Right cardiac atrium (tissue), 5 donors: ENCODE measurements at regions of chr11 and their contacts with region 1.

Region 1: GRCh38 chr11:86802601-86803051 is 2.3 kb downstream of the PRSS23 start:
- DNase-seq: no peak
- ATAC-seq: peak in 1 of 2 donors; percentile 27
- H3K4me3 ChIP-seq: peak overlapping the region; percentile 87
- H3K27ac ChIP-seq: no peak overlapping the region
- H3K4me1 ChIP-seq: peaks cover 8% of the 10 kb centered on the region
- H3K27me3 ChIP-seq: no peaks in the 10 kb centered on the region

Region 2: GRCh38 chr11:86671682-86672621 is 130.7 kb before region 1 on chr11 and contains the start of gene ME3:
- intact Hi-C with region 1: loop called in 2 of 4 experiments (anchors 5 to 10 kb)
- DNase-seq: peak; percentile 75 to 91 (median 89)
- ATAC-seq: peak; percentile 88 to 89
- H3K4me3 ChIP-seq: peak within 1 kb of the TSS; percentile 58
- H3K27ac ChIP-seq: peak within 1 kb of the TSS; percentile 89
- H3K4me1 ChIP-seq: peaks cover 3% of the 10 kb centered on the region
- H3K27me3 ChIP-seq: no peaks in the 10 kb centered on the region
- total RNA-seq, gene ME3: 20.8 to 24.0 (median 23.4) TPM